Endothelial cell of umbilical vein (primary cell): ENCODE measurements at regions of chr10 and their contacts with region 1.

Region 1: GRCh38 chr10:61486738-61487396 is 33.7 kb upstream of the TMEM26 start:
- DNase-seq: peak; percentile 17
- H3K4me3 ChIP-seq: no peak overlapping the region
- H3K27ac ChIP-seq: no peak overlapping the region
- H3K4me1 ChIP-seq: peaks cover 9% of the 10 kb centered on the region
- H3K27me3 ChIP-seq: no peaks in the 10 kb centered on the region
- CTCF ChIP-seq: no peak
- POLR2A ChIP-seq: no peak

Region 2: DNA sequence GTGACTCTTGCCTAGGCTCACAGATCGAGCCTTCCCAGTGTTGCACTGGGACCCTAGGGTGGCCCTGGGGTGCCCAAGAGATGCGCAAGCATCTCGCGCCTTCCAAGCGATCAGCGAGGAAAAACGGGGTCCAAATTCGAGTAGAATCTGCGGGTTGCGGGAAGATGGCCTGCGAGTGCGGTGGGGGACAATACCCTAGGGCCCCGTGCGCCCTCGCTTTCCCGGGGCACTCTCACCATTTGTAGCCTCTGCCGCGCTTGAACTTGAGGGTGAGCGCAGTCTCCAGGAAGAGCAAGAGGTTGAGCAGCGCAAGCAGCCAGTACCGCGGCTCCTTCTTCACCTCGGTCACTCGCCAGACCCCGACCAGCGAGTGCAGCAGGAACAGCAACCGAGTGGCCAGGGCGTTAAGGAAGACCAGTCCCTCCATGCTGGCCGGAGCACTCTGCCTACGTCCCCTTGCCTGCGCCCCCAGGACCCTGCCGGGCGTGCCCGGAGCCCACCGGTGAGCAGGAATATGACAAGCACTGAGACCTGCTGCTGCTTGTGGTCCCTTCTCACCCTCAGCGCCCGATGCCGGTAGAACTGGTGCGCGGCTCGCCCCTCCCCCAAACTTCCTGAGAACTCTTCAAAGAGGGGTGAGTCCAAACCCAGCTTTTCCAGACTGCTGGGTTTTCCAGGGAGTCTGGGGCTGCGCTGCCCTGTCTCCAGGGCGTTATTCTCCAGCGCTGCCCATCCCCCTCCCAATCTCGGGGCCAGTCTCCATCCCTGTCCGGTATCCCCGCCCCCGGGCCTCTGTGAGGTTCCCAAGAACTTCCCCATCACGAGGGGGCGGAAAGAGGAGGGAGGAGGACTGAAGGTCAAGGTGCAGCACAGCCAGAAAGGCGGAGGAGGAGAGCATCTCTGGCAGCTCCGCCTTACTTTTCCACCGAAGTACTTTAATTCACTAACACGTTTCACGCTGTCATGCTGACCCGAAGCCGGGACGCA is 33.9 kb before region 1 on chr10 and contains the start of gene TMEM26:
- CTCF ChIA-PET with region 1: no interaction called
- POLR2A ChIA-PET with region 1: no interaction called
- dilution Hi-C with region 1: no loop called
- intact Hi-C with region 1: loop called (anchors 2 kb)
- DNase-seq: peak; percentile 43
- H3K4me3 ChIP-seq: peak within 1 kb of the TSS; percentile 36 to 59 (median 36)
- H3K27ac ChIP-seq: no peak within 1 kb of the TSS
- H3K4me1 ChIP-seq: peaks cover 7% of the 10 kb centered on the region
- H3K27me3 ChIP-seq: peaks cover 0 to 7% of the 10 kb centered on the region in 2 experiments
- CTCF ChIP-seq: no peak
- POLR2A ChIP-seq: no peak
- total RNA-seq, gene TMEM26: 0.23 and 0.27 TPM in 2 replicates

Region 3: DNA sequence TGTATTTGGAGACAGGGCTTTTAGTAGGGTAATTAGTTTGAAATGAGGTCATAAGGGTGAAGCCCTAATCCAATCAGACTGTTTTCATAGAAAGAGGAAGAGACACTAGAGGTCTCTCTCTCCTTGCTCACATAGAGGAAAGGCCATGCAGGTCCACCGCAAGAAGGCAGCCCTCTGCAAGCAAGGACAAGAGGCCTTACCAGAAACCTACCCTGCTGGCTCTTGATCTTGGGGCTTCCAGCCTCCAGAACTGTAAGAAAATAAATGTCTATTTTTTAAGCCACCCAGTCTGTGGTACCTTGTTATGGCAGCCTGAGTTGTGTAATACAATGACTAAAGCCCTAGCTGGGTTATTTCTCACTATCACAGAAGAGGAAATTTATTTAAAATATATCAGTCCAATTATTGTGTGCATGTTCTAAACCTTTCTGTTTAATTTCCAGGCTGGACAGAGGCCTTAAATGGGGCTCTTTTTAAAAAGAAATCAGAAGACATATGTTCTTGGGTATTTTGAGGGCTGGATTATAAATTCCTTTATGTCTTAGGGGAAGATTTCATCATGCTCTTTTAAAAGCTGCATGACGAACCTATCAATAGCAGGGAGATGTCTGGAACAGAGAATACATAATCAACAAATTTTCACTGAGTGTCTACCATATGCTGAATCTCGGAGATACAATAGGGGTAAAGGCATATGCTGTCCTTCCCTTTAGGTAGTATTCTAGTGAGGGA is 20.8 kb before region 1 on chr10:
- CTCF ChIA-PET with region 1: interaction called, 3 read pairs
- POLR2A ChIA-PET with region 1: no interaction called
- dilution Hi-C with region 1: no loop called
- intact Hi-C with region 1: loop called (anchors 1 kb)
- DNase-seq: no peak
- H3K4me3 ChIP-seq: no peak overlapping the region
- H3K27ac ChIP-seq: no peak overlapping the region
- H3K4me1 ChIP-seq: peaks cover 13% of the 10 kb centered on the region
- H3K27me3 ChIP-seq: no peaks in the 10 kb centered on the region
- CTCF ChIP-seq: no peak
- POLR2A ChIP-seq: no peak